B cell (primary cell): ENCODE measurements at regions of chr12 and their contacts with region 1.

Region 1: GRCh38 chr12:132003846-132004245 is 54.1 kb downstream of the EP400 start:
- DNase-seq: no peak
- ATAC-seq: no peak
- H3K4me3 ChIP-seq: no peak overlapping the region
- H3K4me3 Mint-ChIP-seq: no peak overlapping the region
- H3K27ac ChIP-seq: no peak overlapping the region
- H3K27ac Mint-ChIP-seq: no peak overlapping the region
- H3K4me1 ChIP-seq: no peaks in the 10 kb centered on the region
- H3K4me1 Mint-ChIP-seq: peaks cover 2% of the 10 kb centered on the region
- H3K27me3 ChIP-seq: no peaks in the 10 kb centered on the region
- H3K27me3 Mint-ChIP-seq: no peaks in the 10 kb centered on the region
- CTCF ChIP-seq: no peak

Region 2: DNA sequence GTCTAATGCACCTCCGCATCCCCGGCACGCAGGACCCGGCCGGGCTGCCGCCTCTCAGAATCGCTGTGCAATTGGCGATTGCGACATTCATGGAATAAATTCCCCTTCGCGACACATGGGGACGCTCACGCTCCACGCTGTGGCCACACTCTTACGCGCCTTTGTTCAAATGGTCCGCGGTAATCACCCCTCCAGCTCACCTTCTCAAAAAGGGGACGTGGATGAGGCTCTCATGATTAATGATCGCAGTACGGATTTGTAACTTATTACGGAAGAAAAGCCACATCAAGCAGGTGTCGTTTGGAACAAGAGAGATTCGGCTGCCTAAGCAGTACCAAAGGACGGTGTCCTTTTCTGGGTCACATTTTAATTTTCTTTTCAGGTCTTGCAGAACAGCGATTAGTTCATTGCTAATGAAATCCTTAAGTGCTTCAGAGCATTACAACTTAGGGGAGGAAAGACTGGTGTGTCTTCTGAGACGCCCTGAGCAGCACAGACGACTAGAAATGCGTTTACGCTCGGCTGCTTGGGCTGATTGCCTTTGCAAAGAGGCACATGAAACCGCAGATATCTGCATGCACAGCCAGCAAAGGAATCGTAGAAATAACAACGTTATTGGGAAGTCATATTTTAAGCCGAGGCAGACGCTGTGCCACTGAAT is 1087.5 kb before region 1 on chr12:
- CTCF ChIA-PET with region 1: interaction called, 4 read pairs
- POLR2A ChIA-PET with region 1: no interaction called
- intact Hi-C with region 1: loop called (anchors 10 kb)
- DNase-seq: peak; percentile 80
- ATAC-seq: no peak
- H3K4me3 ChIP-seq: peak overlapping the region in 1 of 5 experiments; percentile 7
- H3K4me3 Mint-ChIP-seq: peak overlapping the region; percentile 59
- H3K27ac ChIP-seq: no peak overlapping the region
- H3K27ac Mint-ChIP-seq: no peak overlapping the region
- H3K4me1 ChIP-seq: peaks cover 6 to 11% of the 10 kb centered on the region in 2 donors
- H3K4me1 Mint-ChIP-seq: peaks cover 10% of the 10 kb centered on the region
- H3K27me3 ChIP-seq: peaks cover 0 to 6% (median 0%) of the 10 kb centered on the region in 4 experiments
- H3K27me3 Mint-ChIP-seq: peaks cover 48% of the 10 kb centered on the region
- CTCF ChIP-seq: peak; percentile 96

Region 3: GRCh38 chr12:131850856-131851559 is 152.8 kb before region 1 on chr12:
- CTCF ChIA-PET with region 1: interaction called, 13 read pairs
- POLR2A ChIA-PET with region 1: no interaction called
- intact Hi-C with region 1: loop called (anchors 1 kb)
- DNase-seq: no peak
- ATAC-seq: peak; percentile 52
- H3K4me3 ChIP-seq: no peak overlapping the region
- H3K4me3 Mint-ChIP-seq: no peak overlapping the region
- H3K27ac ChIP-seq: no peak overlapping the region
- H3K27ac Mint-ChIP-seq: no peak overlapping the region
- H3K4me1 ChIP-seq: peaks cover 18 to 19% of the 10 kb centered on the region in 2 donors
- H3K4me1 Mint-ChIP-seq: peaks cover 18% of the 10 kb centered on the region
- H3K27me3 ChIP-seq: peaks cover 0 to 2% (median 0%) of the 10 kb centered on the region in 4 experiments
- H3K27me3 Mint-ChIP-seq: peaks cover under 1% of the 10 kb centered on the region
- CTCF ChIP-seq: peak; percentile 60